BJ (cell line): ENCODE measurements at regions of chr1 and their contacts with region 1.

Region 1: DNA sequence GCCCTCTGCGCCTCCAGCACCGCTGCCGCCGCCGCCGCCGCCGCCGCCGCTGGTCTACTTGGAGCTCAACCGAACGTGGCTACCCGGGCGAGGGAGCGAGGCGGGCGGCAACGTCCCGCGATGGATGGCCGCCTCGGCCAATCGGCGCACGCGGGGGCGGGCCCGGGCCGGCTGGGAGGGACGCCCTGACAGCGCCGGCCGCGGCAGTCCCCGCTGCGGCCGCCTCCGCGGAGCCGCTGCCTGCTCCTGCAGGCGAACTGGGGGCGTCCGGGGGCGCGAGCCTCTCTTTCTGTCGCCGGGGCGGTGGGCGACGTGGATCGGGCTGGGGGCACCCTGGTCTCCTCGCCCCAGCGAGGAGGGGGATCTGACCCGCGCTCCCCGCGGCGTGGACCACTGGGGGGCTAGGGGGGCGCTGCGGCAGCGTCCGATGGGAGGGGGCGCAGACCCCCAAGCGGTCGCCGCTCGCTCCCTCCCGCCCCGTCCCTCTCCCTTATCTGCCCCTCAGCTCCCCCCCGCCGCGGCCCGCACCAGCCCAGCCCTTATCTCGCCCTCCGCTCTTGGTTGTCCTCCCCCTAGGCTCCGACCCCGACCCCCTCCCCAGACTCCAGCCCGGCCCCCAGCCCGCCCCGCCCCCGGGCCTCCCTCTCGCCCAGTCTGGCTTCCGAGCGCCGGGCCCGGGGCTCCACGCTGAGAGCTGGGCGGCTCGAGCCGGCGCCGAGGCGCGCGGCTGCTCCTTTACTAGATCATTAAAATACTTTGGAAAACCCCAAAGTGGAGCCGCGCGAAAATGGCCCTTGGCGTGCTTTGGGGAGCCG is at the start of gene SSBP3:
- DNase-seq: no peak
- H3K4me3 ChIP-seq: peak within 1 kb of the TSS; percentile 82
- H3K27me3 ChIP-seq: no peaks in the 10 kb centered on the region
- CTCF ChIP-seq: no peak
- polyA plus RNA-seq, gene SSBP3: 19.6 and 25.9 TPM in 2 replicates

Region 2: DNA sequence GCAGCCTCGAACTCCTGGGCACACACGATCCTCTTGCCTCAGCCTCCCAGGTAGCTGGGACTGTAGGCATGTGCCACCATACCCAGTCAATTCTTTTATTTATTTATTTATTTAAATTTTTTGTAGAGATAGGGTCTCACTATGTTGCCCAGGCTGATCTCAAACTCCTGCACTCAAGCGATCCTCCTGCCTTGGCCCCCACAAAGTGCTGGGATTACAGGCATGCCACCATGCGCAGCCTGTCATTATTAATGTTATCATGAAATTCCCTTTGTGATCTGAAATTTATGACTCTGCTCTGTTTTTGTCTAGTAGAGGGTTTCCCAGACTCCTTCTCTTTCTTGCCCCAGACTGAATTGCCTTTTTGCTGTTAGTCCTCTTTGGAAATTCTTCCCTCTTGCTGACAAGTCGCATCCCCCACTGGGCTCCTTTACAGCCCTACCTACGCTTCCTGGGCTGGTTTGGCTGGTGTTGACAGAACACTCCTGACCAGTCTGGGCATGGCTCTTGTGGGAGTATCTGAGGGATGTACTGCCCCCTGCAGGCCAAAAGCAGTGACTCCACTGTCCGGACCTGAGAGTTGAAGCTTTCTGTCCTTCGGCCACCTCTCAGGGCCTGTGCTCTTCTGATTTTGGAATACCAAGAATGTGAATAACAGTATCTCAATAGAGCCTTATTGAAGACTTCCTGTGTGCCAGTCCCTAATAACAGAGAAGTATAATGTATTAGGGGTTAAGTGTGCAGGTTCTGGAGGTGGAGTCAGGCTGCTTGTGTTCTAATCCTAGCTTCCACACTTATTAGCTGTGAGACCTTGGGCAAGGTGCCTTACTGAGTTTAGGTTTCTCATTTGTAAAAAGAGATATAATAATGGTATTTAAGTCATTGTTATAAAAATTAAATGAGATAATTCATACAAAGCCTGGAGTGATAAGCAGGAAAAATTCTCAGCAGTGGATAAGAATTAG is 325.0 kb before region 1 on chr1:
- CTCF ChIA-PET with region 1: no interaction called
- POLR2A ChIA-PET with region 1: no interaction called
- DNase-seq: peak; percentile 1
- H3K4me3 ChIP-seq: no peak overlapping the region
- H3K27me3 ChIP-seq: no peaks in the 10 kb centered on the region
- CTCF ChIP-seq: peak; percentile 76

Region 3: DNA sequence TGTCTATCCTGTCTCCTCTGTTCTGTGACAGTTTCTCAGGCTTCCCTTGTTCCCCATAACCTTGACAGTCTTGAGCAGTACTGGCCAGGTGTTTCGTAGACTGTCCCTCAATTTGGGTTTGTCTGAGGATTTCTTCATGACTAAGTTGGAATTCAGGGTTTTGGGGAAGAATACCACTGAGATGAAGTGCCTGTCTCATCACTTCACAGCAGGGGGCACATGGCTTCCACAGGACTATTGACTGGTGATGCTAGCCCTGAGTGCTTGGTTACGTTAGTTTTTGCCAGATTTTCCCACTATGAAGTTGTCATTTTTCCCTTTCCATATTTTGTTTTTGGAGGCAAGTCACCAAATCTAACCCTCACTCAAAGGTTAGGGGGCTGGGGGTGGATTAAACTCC is 299.4 kb before region 1 on chr1:
- CTCF ChIA-PET with region 1: no interaction called
- POLR2A ChIA-PET with region 1: no interaction called
- DNase-seq: no peak
- H3K4me3 ChIP-seq: no peak overlapping the region
- H3K27me3 ChIP-seq: no peaks in the 10 kb centered on the region
- CTCF ChIP-seq: 0 out of 2 replicates have a peak, but pooled peaks have one; percentile 30

Region 4: DNA sequence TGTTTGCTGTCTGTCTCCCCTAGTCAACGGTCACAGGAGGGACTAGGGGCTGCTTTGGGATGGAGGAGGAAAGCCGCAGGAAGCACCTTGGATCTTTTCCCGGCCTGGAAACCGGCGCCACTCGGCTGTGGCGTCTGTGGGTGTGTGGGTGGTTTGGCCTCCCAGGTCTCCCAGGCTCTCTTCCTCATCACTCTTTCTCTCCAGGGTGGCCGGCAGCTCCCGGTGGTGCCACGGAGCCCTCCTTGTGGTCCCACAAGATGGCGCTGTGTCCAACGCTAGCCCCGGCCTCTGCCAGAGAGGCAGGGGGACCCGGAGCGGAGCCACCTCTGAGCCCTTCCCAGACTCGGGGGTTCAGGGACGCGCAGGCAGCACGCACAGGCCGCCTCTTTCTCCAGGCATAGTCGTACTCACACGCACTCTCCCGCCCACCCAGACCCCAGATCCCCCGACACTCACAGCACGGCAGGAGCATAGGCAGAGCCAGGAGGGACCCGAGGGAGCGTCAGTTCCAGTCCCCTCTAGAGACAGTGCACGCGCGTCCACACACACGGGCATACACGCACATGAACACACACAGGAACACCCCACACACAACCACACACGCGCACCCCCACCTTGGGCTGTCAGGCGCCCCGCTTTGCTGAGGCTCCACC is 284.9 kb before region 1 on chr1:
- CTCF ChIA-PET with region 1: interaction called, 15 read pairs
- POLR2A ChIA-PET with region 1: no interaction called
- DNase-seq: no peak
- H3K4me3 ChIP-seq: peak overlapping the region; percentile 5; the same call in 1 of the 2 replicates
- H3K27me3 ChIP-seq: no peaks in the 10 kb centered on the region
- CTCF ChIP-seq: peak; percentile 88

Region 5: DNA sequence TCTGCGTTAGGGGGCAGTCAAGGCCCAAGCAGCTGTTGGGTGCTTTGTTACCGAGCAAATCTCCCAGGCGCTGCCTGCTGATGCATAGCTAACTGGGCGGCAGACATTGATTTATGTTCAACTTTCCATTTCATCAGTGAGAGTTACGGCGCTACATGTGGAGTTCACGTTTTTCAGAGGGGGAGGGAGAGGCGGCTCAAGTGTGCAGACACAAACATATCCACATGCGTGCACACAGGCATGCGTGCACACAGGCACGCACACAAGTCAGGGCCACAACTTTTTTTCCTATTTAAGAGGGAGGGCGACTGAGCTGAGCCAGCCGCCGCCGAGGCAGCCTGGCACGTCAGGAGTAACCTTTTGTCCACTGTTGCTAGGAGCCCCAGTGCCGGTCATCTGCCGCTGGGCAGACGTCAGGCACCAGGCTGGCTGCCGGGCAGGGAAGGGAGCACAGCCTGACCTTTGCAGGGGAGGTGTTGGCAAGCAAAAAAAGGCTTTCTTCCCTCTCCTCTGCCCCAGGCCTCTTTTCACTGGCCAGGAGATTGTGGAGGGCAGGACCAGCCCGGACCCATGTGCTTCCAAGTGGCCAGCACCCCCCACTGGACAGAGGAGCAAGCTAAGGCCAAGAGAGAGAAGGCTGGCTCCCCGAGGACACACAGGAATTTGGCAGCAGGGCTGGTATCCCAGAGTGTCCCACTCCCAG is 133.3 kb before region 1 on chr1:
- CTCF ChIA-PET with region 1: interaction called, 17 read pairs
- POLR2A ChIA-PET with region 1: no interaction called
- DNase-seq: no peak
- H3K4me3 ChIP-seq: no peak overlapping the region
- H3K27me3 ChIP-seq: no peaks in the 10 kb centered on the region
- CTCF ChIP-seq: peak; percentile 87